Dorsolateral prefrontal cortex (tissue), 120 donors: ENCODE measurements at regions of chr5 and their contacts with region 1.

Region 1: GRCh38 chr5:40688127-40688761 is 8.5 kb downstream of the PTGER4 start:
- DNase-seq: peak; percentile 63 to 91 (median 80)
- H3K4me3 ChIP-seq: peak overlapping the region in 10 of 59 donors; percentile 1 to 30 (median 4)
- H3K27ac ChIP-seq: no peak overlapping the region
- H3K27me3 ChIP-seq: peaks cover 0 to 21% (median 0%) of the 10 kb centered on the region in 45 donors
- CTCF ChIP-seq: peak; percentile 54 to 99 (median 92)

Region 2: GRCh38 chr5:39714036-39714698 is 974.1 kb before region 1 on chr5:
- intact Hi-C with region 1: loop called (anchors 5 kb)
- DNase-seq: no peak
- H3K4me3 ChIP-seq: no peak overlapping the region
- H3K27ac ChIP-seq: no peak overlapping the region
- H3K27me3 ChIP-seq: peaks cover 0 to 7% (median 0%) of the 10 kb centered on the region in 45 donors
- CTCF ChIP-seq: peak; percentile 40 to 77 (median 62)

Region 3: DNA sequence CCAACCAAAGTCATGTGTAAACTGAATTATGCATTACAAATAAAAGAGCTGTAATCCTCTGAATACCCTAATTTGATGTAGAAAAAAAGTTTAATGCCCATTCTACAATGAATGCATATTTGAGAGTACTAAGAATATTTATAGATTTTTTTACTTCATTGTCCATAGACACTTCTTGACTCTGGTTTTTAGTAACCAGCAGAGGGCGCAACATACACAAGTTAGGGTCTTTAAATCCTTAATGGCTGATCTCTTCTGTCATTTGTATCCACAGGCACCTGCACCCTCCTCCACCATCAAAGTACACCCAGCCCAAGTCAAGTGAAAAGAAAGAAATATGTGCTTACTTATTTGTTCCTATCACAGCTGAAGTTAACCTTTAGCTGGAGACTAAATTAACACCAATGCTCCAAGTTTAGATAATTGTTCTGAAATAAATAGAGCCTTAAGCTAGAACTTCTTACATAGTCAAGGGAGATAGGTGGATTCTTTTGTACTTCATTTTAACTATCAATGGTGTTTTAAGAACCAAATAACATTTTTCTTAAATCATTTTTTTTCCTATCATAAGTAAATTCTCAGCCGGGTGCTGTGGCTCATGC is 739.3 kb before region 1 on chr5:
- intact Hi-C with region 1: loop called (anchors 2 kb)
- DNase-seq: peak in 2 of 10 donors; percentile 7 to 57
- H3K4me3 ChIP-seq: no peak overlapping the region
- H3K27ac ChIP-seq: no peak overlapping the region
- H3K27me3 ChIP-seq: no peaks in the 10 kb centered on the region
- CTCF ChIP-seq: peak; percentile 47 to 83 (median 71)

Region 4: GRCh38 chr5:40755407-40756365 is 67.4 kb after region 1 on chr5 and contains the start of gene TTC33:
- intact Hi-C with region 1: no loop called
- DNase-seq: peak; percentile 96 to 99 (median 97)
- H3K4me3 ChIP-seq: peak within 1 kb of the TSS; percentile 63 to 98 (median 89)
- H3K27ac ChIP-seq: peak within 1 kb of the TSS; percentile 19 to 96 (median 91)
- H3K27me3 ChIP-seq: no peaks in the 10 kb centered on the region
- CTCF ChIP-seq: peak; percentile 46 to 95 (median 86)
- total RNA-seq, gene TTC33: 14.3 to 56.7 (median 40.2) TPM